Sciatic nerve (tissue), 2 donors: ENCODE measurements at regions of chr5 and their contacts with region 1.

Region 1: DNA sequence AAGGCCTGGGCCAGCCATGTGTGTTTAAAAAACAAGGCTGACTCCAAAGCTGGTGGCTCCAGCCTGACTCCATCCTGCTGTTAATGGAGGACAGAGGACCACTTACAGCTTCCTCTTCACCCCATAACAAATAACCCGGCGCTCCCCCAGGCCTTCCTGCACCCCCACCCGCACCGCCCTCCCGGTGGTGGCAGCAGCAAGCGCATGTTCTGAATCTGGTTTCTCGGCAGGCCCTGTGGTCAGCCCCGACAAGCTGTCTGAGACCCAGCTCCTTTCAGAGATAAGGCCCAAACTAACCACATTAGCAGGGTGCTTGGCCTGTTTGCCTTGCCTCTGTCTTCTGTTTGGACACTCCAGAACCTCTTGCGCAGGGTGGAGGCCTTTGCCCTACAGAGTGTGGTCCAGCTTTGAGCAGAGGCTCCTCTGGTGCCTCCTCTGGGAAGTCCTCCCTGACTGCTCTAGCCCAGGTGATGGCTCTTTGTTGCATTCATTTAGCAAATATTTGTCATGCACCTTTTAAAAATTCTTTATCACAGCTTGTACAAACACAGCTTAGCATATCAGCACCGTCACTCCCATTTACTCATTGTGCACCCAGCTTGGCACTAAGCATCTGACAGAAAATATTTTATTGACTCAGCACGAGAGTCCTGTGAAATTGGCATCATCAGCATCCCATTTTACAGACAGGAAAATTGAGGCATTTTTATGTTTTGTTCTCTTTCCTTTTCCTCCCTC is 78.4 kb downstream of the NDFIP1 start:
- DNase-seq: no peak
- ATAC-seq: no peak

Region 2: DNA sequence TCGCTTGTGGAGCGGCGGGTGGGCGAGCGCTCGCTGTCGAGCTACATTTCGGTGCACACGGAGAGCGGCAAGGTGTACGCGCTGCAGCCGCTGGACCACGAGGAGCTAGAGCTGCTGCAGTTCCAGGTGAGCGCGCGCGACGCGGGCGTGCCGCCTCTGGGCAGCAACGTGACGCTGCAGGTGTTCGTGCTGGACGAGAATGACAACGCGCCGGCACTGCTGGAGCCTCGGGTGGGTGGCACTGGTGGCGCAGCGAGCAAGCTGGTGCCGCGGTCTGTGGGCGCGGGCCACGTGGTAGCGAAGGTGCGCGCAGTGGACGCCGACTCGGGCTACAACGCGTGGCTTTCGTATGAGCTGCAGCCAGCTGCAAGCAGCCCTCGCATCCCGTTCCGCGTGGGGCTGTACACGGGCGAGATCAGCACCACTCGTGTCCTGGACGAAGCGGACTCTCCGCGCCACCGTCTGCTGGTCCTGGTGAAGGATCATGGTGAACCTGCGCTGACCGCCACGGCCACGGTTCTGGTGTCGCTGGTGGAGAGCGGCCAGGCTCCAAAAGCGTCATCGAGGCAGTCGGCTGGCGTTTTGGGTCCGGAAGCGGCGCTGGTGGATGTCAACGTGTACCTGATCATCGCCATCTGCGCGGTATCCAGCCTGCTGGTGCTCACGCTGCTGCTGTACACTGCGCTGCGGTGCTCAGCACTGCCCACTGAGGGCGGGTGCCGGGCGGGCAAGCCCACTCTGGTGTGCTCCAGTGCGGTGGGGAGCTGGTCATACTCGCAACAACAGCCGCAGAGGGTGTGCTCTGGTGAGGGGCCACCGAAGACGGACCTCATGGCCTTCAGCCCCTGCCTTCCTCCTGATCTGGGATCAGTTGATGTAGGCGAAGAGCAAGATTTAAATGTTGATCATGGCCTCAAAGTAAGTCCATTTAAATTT is 1344.0 kb before region 1 on chr5:
- intact Hi-C with region 1: no loop called
- DNase-seq: no peak
- ATAC-seq: no peak

Region 3: GRCh38 chr5:142221091-142221860 is 34.2 kb after region 1 on chr5:
- intact Hi-C with region 1: no loop called
- DNase-seq: no peak
- ATAC-seq: peak; percentile 61

Region 4: DNA sequence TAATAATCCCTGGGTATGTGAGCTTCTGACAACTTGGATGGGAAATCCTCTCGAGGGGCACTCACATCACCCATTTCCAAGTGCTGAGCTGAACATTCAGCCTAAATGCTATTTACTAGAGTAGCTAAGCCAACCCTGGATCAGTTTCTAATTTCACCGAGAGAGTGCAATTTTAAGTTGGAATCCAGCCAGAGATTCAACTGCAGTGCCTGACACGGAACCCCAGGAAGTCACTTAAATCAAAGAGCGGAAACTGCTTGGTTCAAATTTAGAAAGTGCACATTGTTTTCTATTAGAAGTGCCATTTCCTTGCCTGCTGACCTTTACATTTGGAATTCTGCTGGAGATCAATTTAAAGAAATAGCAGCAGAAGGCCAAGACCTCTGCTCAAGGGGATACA is 129.0 kb after region 1 on chr5:
- intact Hi-C with region 1: loop called (anchors 10 kb)
- DNase-seq: no peak
- ATAC-seq: peak; percentile 33